Ovary (tissue), 10 donors: ENCODE measurements at regions of chrX and their contacts with region 1.

Region 1: GRCh38 chrX:84956304-84956703 is 47.4 kb upstream of the APOOL start:
- DNase-seq: no peak
- H3K4me3 ChIP-seq: no peak overlapping the region
- H3K27ac ChIP-seq: no peak overlapping the region
- H3K4me1 ChIP-seq: no peaks in the 10 kb centered on the region
- H3K27me3 ChIP-seq: no peaks in the 10 kb centered on the region
- CTCF ChIP-seq: no peak
- EP300 ChIP-seq: no peak
- POLR2A ChIP-seq: no peak

Region 2: GRCh38 chrX:84690228-84690627 is 266.1 kb before region 1 on chrX:
- intact Hi-C with region 1: no loop called
- DNase-seq: no peak
- H3K4me3 ChIP-seq: no peak overlapping the region
- H3K27ac ChIP-seq: no peak overlapping the region
- H3K4me1 ChIP-seq: no peaks in the 10 kb centered on the region
- H3K27me3 ChIP-seq: no peaks in the 10 kb centered on the region
- CTCF ChIP-seq: no peak
- EP300 ChIP-seq: no peak
- POLR2A ChIP-seq: no peak

Region 3: DNA sequence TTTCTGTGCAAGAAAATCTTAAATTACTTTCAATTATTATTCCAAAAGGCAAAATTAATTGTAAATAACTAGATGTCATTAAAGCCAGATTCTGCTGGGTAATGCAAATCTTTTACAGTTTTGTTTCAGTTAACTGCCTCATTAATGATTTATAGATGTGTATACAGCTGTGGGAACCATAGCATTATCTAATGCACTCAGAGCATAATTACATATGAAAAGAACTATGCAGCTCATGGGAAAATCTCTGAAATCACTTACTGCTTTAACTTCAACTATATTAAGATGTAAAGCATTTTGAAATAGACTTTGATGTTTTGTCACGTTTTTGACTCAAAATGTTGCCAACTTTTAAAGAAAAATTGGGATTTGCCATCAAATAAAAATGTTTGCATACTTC is 1931.0 kb after region 1 on chrX:
- intact Hi-C with region 1: loop called in 1 of 4 experiments (anchors 5 kb)
- DNase-seq: no peak
- H3K4me3 ChIP-seq: no peak overlapping the region
- H3K27ac ChIP-seq: no peak overlapping the region
- H3K4me1 ChIP-seq: no peaks in the 10 kb centered on the region
- H3K27me3 ChIP-seq: no peaks in the 10 kb centered on the region
- CTCF ChIP-seq: no peak
- EP300 ChIP-seq: no peak
- POLR2A ChIP-seq: no peak